K562 (cell line): ENCODE measurements at regions of chr2 and their contacts with region 1.

Region 1: DNA sequence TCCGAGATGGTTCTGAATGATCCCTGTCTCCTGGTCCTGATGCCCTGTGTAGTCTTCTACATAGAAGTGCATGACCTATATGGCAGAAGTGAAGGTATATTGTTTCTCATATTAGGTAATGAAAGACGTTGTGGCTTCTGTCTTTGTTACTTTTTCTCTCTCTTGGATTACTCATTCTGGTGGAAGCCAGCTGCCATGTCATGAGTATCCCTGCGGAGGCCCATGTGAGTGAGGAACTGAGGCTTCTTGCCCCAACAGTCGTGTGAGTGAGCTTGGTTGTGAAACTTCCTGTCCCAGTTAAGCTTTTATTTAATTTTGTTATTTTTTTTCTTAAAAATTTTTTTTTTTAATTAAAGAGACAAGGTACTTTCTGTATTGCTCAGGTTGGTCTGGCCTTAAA is 134.7 kb downstream of the UBR3 start:
- DNase-seq: no peak
- ATAC-seq: no peak
- H3K4me3 ChIP-seq: no peak overlapping the region
- H3K27ac ChIP-seq: no peak overlapping the region
- H3K4me1 ChIP-seq: peaks cover 0 to 8% of the 10 kb centered on the region in 2 experiments; a peak in 2 of 5 replicates
- H3K27me3 ChIP-seq: no peaks in the 10 kb centered on the region
- CTCF ChIP-seq: no peak
- EP300 ChIP-seq: no peak
- POLR2A ChIP-seq: no peak
- RAD21 ChIP-seq: no peak

Region 2: GRCh38 chr2:170467568-170468422 is 505.9 kb after region 1 on chr2:
- CTCF ChIA-PET with region 1: interaction called, 11 read pairs
- POLR2A ChIA-PET with region 1: no interaction called
- in situ Hi-C with region 1: no loop called
- intact Hi-C with region 1: no loop called
- DNase-seq: no peak
- ATAC-seq: no peak
- H3K4me3 ChIP-seq: no peak overlapping the region
- H3K27ac ChIP-seq: no peak overlapping the region
- H3K4me1 ChIP-seq: peaks cover 0 to 6% of the 10 kb centered on the region in 2 experiments; a peak in 1 of 5 replicates
- H3K27me3 ChIP-seq: no peaks in the 10 kb centered on the region
- CTCF ChIP-seq: no peak
- EP300 ChIP-seq: no peak
- POLR2A ChIP-seq: no peak
- RAD21 ChIP-seq: no peak